CD4-positive, alpha-beta memory T cell (primary cell): ENCODE measurements at regions of chr5 and their contacts with region 1.

Region 1: DNA sequence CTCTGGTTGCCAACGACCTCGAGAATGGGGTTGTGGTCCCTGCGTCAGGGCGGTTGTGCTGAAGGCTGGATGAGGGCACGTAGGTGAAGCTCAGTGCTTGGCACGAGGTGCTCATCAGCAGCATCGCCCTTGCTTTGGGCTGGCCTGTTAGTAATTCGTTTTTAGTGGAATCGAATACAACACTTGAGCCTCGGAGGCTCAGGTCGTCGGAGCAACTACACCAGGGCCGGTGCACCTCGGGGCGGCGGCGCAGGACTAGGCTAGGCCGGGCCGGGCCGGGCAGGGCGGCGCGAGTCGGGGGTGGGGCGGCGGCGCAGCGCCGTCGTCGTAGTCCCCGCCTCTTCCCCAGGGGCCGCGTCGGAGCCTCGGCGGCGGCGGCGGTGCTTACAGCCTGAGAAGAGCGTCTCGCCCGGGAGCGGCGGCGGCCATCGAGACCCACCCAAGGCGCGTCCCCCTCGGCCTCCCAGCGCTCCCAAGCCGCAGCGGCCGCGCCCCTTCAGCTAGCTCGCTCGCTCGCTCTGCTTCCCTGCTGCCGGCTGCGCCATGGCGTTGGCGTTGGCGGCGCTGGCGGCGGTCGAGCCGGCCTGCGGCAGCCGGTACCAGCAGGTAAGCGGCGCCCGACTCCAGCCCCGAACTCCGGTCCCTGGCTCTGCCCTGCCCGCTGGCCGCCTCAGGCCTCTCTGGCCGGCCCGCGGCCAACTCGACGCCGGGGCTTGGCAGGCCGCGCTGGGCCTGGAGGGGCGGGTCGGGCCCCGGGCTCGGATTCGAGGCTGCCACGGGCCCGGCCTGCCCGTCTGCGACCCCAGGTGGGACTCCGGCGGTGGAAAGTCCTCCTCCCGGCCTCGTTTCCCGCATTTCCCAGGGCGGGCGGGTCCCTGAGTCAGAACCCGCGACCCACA is at the start of gene NDFIP1:
- DNase-seq: peak; percentile 84 to 90 (median 88)
- H3K4me3 ChIP-seq: peak within 1 kb of the TSS; percentile 78 to 80
- H3K4me3 Mint-ChIP-seq: peak within 1 kb of the TSS; percentile 94 to 100 (median 96)
- H3K27ac ChIP-seq: peak within 1 kb of the TSS; percentile 95
- H3K27ac Mint-ChIP-seq: peak within 1 kb of the TSS; percentile 95 to 99 (median 99)
- H3K4me1 ChIP-seq: peaks cover 71% of the 10 kb centered on the region
- H3K4me1 Mint-ChIP-seq: peaks cover 46 to 76% (median 56%) of the 10 kb centered on the region in 4 donors
- H3K27me3 ChIP-seq: no peaks in the 10 kb centered on the region
- H3K27me3 Mint-ChIP-seq: no peaks in the 10 kb centered on the region
- total RNA-seq, gene NDFIP1: 73.8 to 78.4 TPM

Region 2: GRCh38 chr5:142024771-142025304 is 83.8 kb before region 1 on chr5:
- CTCF ChIA-PET with region 1: interaction called, 4 read pairs
- POLR2A ChIA-PET with region 1: interaction called, 31 read pairs
- intact Hi-C with region 1: loop called (anchors 2 kb)
- DNase-seq: peak; percentile 78 to 86 (median 81)
- H3K4me3 ChIP-seq: peak overlapping the region; percentile 37 to 52
- H3K4me3 Mint-ChIP-seq: peak overlapping the region; percentile 84 to 94 (median 88)
- H3K27ac ChIP-seq: peak overlapping the region; percentile 57
- H3K27ac Mint-ChIP-seq: peak overlapping the region; percentile 93 to 99 (median 98)
- H3K4me1 ChIP-seq: peaks cover 13% of the 10 kb centered on the region
- H3K4me1 Mint-ChIP-seq: peaks cover 16 to 23% (median 19%) of the 10 kb centered on the region in 4 donors
- H3K27me3 ChIP-seq: no peaks in the 10 kb centered on the region
- H3K27me3 Mint-ChIP-seq: no peaks in the 10 kb centered on the region

Region 3: DNA sequence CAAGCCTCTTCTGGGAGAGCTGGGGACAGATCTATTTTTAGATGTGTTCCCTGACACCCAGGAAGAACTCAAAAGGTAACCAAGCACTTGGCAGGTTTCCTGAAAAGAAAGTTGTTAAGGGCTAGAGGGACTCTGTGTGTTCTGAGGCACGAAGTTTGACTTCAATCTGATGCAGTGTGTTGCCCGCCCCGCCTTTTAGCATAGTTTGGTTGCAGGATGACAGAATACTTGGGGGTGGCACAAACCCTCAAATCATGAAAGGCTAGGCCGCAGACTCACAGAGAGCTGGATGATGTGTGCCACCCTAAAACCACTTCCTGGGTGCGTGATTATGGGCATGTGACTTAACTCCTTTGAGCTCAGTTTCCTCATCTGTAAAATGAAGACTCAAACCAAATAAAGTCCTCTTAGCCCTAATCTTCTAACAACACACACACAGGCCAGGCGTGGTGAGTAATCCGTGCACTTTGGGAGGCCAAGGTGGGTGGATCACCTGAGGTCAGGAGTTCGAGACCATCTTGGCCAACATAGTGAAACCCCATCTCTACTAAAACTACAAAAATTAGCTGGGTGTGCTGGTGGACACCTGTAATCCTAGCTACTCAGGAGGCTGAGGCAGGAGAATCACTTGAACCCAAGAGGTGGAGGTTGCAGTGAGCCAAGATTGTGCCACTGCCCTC is 12.9 kb before region 1 on chr5:
- CTCF ChIA-PET with region 1: interaction called, 44 read pairs
- POLR2A ChIA-PET with region 1: interaction called, 96 read pairs
- intact Hi-C with region 1: loop called (anchors 1 kb)
- DNase-seq: peak; percentile 85 to 93 (median 91)
- H3K4me3 ChIP-seq: peak overlapping the region in 1 of 2 donors; percentile 27
- H3K4me3 Mint-ChIP-seq: peak overlapping the region; percentile 37 to 73 (median 57)
- H3K27ac ChIP-seq: peak overlapping the region; percentile 84
- H3K27ac Mint-ChIP-seq: peak overlapping the region; percentile 92 to 98 (median 96)
- H3K4me1 ChIP-seq: peaks cover 48% of the 10 kb centered on the region
- H3K4me1 Mint-ChIP-seq: peaks cover 31 to 51% (median 36%) of the 10 kb centered on the region in 4 donors
- H3K27me3 ChIP-seq: no peaks in the 10 kb centered on the region
- H3K27me3 Mint-ChIP-seq: no peaks in the 10 kb centered on the region

Region 4: GRCh38 chr5:142128675-142129208 is 20.1 kb after region 1 on chr5:
- CTCF ChIA-PET with region 1: interaction called, 7 read pairs
- POLR2A ChIA-PET with region 1: interaction called, 20 read pairs
- intact Hi-C with region 1: loop called (anchors 2 kb)
- DNase-seq: no peak
- H3K4me3 ChIP-seq: no peak overlapping the region
- H3K4me3 Mint-ChIP-seq: peak overlapping the region in 4 of 8 donors; percentile 44 to 54 (median 50)
- H3K27ac ChIP-seq: no peak overlapping the region
- H3K27ac Mint-ChIP-seq: peak overlapping the region; percentile 1 to 86 (median 48)
- H3K4me1 ChIP-seq: peaks cover 75% of the 10 kb centered on the region
- H3K4me1 Mint-ChIP-seq: peaks cover 44 to 71% (median 56%) of the 10 kb centered on the region in 4 donors
- H3K27me3 ChIP-seq: no peaks in the 10 kb centered on the region
- H3K27me3 Mint-ChIP-seq: no peaks in the 10 kb centered on the region

Region 5: DNA sequence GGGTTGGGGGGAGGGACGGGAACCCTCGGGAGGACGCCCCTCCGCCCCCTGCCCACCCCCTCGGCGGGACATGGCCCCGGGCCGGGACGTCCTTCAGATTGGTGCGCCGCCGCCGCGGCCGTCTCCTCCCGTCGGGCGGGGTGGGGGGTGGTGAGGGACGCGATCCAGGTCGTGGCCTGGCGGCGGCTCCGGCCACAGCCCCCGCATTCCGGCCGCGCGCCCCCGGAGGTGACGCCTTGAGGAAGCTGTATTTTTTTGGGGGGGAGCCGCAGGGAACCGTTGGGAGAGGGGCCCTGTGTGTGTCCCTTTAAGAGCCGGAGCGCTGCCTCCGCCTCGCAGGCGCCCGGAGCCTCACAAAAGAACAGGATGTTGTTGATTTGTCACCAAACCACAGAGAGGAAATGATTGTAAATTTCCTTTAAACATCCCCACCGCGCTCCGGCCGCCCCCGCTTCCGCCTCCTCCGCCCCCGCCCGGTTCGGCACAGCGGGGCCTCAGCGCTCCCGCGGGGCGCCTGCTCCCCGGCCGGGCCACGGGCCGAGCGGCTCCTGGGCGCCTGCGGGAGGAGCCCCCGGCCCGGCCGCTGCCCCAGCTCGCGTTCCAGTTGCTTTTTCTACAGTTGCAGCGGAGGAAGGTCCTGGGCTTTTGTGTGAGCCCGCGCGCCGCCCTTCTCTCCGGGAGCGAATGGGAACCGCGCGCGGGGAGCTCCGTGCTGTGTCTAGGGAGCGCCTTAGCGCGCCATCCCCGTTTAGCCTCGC is 248.2 kb after region 1 on chr5:
- CTCF ChIA-PET with region 1: no interaction called
- POLR2A ChIA-PET with region 1: interaction called, 3 read pairs
- intact Hi-C with region 1: loop called (anchors 2 kb)
- DNase-seq: peak; percentile 86 to 91 (median 89)
- H3K4me3 ChIP-seq: peak overlapping the region; percentile 38 to 84
- H3K4me3 Mint-ChIP-seq: peak overlapping the region; percentile 88 to 93 (median 89)
- H3K27ac ChIP-seq: peak overlapping the region; percentile 68
- H3K27ac Mint-ChIP-seq: peak overlapping the region; percentile 88 to 95 (median 93)
- H3K4me1 ChIP-seq: peaks cover 47% of the 10 kb centered on the region
- H3K4me1 Mint-ChIP-seq: peaks cover 41 to 67% (median 48%) of the 10 kb centered on the region in 4 donors
- H3K27me3 ChIP-seq: no peaks in the 10 kb centered on the region
- H3K27me3 Mint-ChIP-seq: no peaks in the 10 kb centered on the region